ENCODE measurements at regions of chr9 and their contacts with region 1.

Region 1: DNA sequence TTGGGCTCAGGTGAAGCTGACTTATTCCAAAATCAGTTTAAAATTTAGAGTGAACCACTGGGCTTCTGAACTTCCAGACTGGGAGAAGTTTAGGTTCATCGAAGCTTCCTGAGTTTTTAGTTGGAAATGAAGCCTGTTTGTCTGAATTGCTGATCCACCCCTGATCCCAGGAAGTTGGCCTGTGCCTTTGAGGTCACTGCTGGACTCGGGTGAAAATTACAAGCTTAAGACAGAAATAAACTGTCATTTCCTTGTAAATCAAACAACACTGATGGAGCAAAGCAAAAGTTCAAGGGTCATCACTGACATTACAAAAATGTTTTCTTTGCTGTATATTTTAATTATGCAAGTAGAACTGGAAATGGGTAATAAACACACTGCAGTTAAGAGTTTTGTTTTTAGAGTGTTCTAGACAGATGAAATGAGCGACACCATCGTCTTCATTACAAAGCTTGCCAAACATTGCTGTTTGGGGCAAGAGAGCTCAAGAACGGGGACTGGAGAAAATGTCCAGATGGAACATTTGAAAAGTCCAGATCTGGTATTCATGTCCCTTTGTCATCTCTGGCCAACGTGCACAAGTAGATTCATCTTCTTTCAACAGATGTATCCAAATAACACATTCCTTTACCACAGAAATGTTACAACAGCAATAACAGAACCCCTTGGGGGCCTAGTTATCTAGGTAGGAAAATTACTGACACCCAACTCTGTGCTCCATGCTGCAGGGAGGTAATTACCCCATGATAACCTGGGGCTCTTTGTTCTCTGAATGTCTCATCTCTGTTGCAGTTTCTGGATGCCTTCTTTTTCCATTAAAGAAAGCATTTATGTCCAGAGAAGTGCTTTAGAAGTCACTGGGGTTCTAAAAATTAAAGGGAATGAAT is 142.4 kb upstream of the ERCC6L2 start:
- DNase-seq: no peak
- H3K4me3 ChIP-seq: no peak overlapping the region
- H3K27ac ChIP-seq: no peak overlapping the region
- H3K4me1 ChIP-seq: no peaks in the 10 kb centered on the region
- H3K27me3 ChIP-seq: no peaks in the 10 kb centered on the region
- CTCF ChIP-seq: no peak
- POLR2A ChIP-seq: no peak

Region 2: GRCh38 chr9:96217754-96218693 is 485.0 kb after region 1 on chr9:
- intact Hi-C with region 1: loop called (anchors 5 kb)
- DNase-seq: no peak
- H3K4me3 ChIP-seq: peak overlapping the region; percentile 25 to 36
- H3K27ac ChIP-seq: peak overlapping the region; percentile 51
- H3K4me1 ChIP-seq: peaks cover 15% of the 10 kb centered on the region
- H3K27me3 ChIP-seq: no peaks in the 10 kb centered on the region
- CTCF ChIP-seq: peak; percentile 75 to 100 (median 96)
- POLR2A ChIP-seq: no peak

Measured in vagina (tissue), 2 donors.